SK-N-SH (cell line): ENCODE measurements at regions of chr9 and their contacts with region 1.

Region 1: DNA sequence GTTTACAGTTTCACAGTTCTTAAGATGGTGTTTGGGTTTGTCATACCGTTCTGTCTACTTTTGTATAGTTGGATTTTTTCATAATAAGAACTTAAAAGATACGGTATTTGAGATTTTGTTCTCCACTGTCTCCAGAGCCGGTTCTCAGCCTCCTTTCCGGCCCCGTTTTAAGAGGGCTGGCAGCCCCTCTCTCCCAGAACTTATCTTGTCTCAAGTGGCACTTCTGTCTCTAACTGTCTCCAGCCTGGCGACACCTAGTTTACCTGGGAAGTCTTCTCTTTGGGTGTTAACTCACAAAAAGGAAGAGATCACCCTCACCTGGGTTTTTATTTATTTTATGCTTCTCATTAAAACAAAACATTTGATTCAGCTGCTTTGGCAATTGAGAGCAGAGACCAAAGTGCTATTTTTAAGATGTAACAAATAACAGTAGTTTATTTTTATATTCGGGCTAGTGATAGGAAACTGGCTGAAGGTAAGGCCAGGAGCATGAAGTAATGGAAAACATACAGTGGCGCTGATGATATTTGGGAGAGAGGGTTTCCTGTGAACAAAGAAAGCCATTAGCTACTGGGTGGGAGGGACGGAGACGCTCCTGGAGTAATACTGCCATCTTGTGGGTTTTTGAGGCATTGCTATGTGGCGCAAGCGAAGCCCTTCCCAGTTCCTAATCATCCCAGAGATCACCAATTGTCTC is 48.3 kb downstream of the ACER2 start:
- DNase-seq: peak; percentile 84
- H3K4me3 ChIP-seq: peak overlapping the region; percentile 37 to 47
- H3K27ac ChIP-seq: no peak overlapping the region
- H3K4me1 ChIP-seq: peaks cover 0 to 3% of the 10 kb centered on the region in 2 experiments; a peak in 1 of 4 replicates
- H3K27me3 ChIP-seq: no peaks in the 10 kb centered on the region
- CTCF ChIP-seq: peak; percentile 95
- EP300 ChIP-seq: no peak
- RAD21 ChIP-seq: peak; percentile 99

Region 2: DNA sequence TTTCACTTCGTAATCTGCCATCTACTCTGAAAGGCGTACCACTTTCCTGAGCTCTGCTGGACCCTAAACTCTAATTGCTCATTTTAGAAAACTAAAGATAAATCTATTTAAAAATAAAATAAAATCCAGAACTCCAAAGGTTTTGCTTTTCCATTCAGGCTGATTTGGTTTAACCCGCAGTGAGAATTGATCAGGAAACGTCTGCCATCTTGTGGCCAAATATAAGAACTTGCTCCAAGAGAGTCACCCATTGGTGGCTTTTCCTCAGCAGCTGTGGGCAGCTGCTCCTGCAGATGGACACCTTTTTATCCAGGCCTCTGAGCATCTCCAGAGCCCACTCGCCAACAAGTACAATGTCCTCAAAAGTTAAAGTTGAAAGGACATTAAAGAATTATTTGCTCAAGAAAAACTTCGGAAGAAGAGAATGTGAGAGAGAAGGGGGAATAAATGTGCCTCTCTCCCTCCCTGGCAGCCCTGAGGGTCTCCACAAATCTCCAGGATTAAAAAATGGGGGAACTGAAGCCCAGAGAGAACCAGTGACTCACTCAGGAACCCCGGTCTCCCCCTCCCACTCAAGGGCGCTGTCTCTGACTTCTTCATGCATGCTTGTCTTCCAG is 428.2 kb before region 1 on chr9:
- CTCF ChIA-PET with region 1: interaction called, 20 read pairs
- POLR2A ChIA-PET with region 1: no interaction called
- DNase-seq: peak; percentile 81
- H3K4me3 ChIP-seq: peak overlapping the region in 1 of 2 experiments; percentile 8; a peak in 1 of 4 replicates
- H3K27ac ChIP-seq: no peak overlapping the region
- H3K4me1 ChIP-seq: no peaks in the 10 kb centered on the region; a peak in 1 of 4 replicates
- H3K27me3 ChIP-seq: no peaks in the 10 kb centered on the region
- CTCF ChIP-seq: peak; percentile 79
- EP300 ChIP-seq: no peak
- RAD21 ChIP-seq: peak; percentile 89

Region 3: GRCh38 chr9:19048966-19049916 is 407.9 kb before region 1 on chr9 and contains the start of gene RRAGA:
- CTCF ChIA-PET with region 1: interaction called, 21 read pairs
- POLR2A ChIA-PET with region 1: interaction called, 3 read pairs
- DNase-seq: peak; percentile 97
- H3K4me3 ChIP-seq: peak within 1 kb of the TSS; percentile 86 to 87
- H3K27ac ChIP-seq: peak within 1 kb of the TSS; percentile 93 to 95
- H3K4me1 ChIP-seq: peaks cover 0 to 13% of the 10 kb centered on the region in 2 experiments; a peak in 2 of 4 replicates
- H3K27me3 ChIP-seq: no peaks in the 10 kb centered on the region
- CTCF ChIP-seq: peak; percentile 92
- EP300 ChIP-seq: no peak
- RAD21 ChIP-seq: peak; percentile 59
- polyA plus RNA-seq, gene RRAGA: 103 and 106 TPM in 2 replicates

Region 4: GRCh38 chr9:19313573-19313972 is 143.6 kb before region 1 on chr9:
- CTCF ChIA-PET with region 1: no interaction called
- POLR2A ChIA-PET with region 1: no interaction called
- DNase-seq: no peak
- H3K4me3 ChIP-seq: no peak overlapping the region
- H3K27ac ChIP-seq: no peak overlapping the region
- H3K4me1 ChIP-seq: no peaks in the 10 kb centered on the region
- H3K27me3 ChIP-seq: no peaks in the 10 kb centered on the region
- CTCF ChIP-seq: no peak
- EP300 ChIP-seq: no peak
- RAD21 ChIP-seq: no peak

Region 5: GRCh38 chr9:19386502-19387044 is 70.6 kb before region 1 on chr9:
- CTCF ChIA-PET with region 1: no interaction called
- POLR2A ChIA-PET with region 1: no interaction called
- DNase-seq: no peak
- H3K4me3 ChIP-seq: no peak overlapping the region
- H3K27ac ChIP-seq: peak overlapping the region in 1 of 2 experiments; percentile 19; a peak in 1 of 4 replicates
- H3K4me1 ChIP-seq: peaks cover 0 to 5% of the 10 kb centered on the region in 2 experiments; a peak in 1 of 4 replicates
- H3K27me3 ChIP-seq: no peaks in the 10 kb centered on the region
- CTCF ChIP-seq: no peak
- EP300 ChIP-seq: no peak
- RAD21 ChIP-seq: no peak

Region 6: DNA sequence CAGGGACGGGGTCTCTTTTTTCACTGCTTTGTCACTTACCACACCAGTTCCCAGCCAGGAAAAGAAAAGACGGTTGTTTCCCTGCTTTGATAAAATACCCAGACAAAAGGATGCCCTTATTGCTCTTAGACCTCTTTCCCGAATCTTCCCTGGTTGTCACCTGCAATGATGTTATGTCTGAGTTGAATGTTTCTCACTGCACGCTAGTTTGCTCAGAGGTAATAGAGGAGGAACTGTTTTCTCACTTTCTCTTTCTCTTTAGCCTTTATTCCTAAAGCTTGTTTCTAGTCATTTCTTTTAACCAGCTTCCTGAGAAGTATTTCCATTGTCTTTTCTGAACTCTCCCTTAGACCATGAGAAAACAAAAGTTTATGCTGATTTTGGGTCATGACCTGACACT is 15.4 kb before region 1 on chr9:
- CTCF ChIA-PET with region 1: interaction called, 18 read pairs
- POLR2A ChIA-PET with region 1: no interaction called
- DNase-seq: no peak
- H3K4me3 ChIP-seq: no peak overlapping the region
- H3K27ac ChIP-seq: no peak overlapping the region
- H3K4me1 ChIP-seq: no peaks in the 10 kb centered on the region
- H3K27me3 ChIP-seq: no peaks in the 10 kb centered on the region
- CTCF ChIP-seq: no peak
- EP300 ChIP-seq: no peak
- RAD21 ChIP-seq: no peak